PC-9 (cell line): ENCODE measurements at regions of chr5 and their contacts with region 1.

Region 1: GRCh38 chr5:93008502-93009207 is 572.4 kb downstream of the NR2F1-AS1 start:
- DNase-seq: no peak
- H3K4me3 ChIP-seq: no peak overlapping the region
- H3K27ac ChIP-seq: no peak overlapping the region
- H3K4me1 ChIP-seq: no peaks in the 10 kb centered on the region
- H3K27me3 ChIP-seq: no peaks in the 10 kb centered on the region
- CTCF ChIP-seq: no peak

Region 2: GRCh38 chr5:92939428-92939827 is 69.2 kb before region 1 on chr5:
- CTCF ChIA-PET with region 1: no interaction called
- POLR2A ChIA-PET with region 1: no interaction called
- intact Hi-C with region 1: loop called (anchors 2 kb)
- DNase-seq: no peak
- H3K4me3 ChIP-seq: no peak overlapping the region
- H3K27ac ChIP-seq: no peak overlapping the region
- H3K4me1 ChIP-seq: no peaks in the 10 kb centered on the region
- H3K27me3 ChIP-seq: no peaks in the 10 kb centered on the region
- CTCF ChIP-seq: no peak

Region 3: DNA sequence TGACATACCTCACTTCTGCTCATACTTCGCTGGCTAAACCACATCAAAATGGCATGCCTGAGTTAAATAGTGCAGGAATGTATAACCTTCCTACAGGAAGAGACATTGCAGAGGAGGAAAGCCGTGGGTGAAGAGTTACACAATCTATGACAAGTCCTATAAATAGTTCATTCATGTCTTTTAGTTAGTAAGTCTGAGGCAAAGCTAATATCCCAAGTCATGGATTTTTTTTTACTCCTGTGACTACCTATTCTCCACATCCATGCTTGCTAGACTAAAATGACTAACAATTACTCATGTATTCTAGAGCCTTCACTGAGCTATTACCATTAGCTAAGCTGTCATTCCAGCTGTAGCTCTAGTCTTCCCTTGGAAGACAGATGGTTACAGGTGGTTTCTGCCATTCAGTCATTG is 181.1 kb after region 1 on chr5:
- CTCF ChIA-PET with region 1: no interaction called
- POLR2A ChIA-PET with region 1: no interaction called
- intact Hi-C with region 1: no loop called
- DNase-seq: peak; percentile 31 to 97
- H3K4me3 ChIP-seq: no peak overlapping the region
- H3K27ac ChIP-seq: peak overlapping the region; percentile 75
- H3K4me1 ChIP-seq: peaks cover 60% of the 10 kb centered on the region
- H3K27me3 ChIP-seq: no peaks in the 10 kb centered on the region
- CTCF ChIP-seq: no peak